Heart right ventricle (tissue), 16 donors: ENCODE measurements at regions of chr21 and their contacts with region 1.

Region 1: DNA sequence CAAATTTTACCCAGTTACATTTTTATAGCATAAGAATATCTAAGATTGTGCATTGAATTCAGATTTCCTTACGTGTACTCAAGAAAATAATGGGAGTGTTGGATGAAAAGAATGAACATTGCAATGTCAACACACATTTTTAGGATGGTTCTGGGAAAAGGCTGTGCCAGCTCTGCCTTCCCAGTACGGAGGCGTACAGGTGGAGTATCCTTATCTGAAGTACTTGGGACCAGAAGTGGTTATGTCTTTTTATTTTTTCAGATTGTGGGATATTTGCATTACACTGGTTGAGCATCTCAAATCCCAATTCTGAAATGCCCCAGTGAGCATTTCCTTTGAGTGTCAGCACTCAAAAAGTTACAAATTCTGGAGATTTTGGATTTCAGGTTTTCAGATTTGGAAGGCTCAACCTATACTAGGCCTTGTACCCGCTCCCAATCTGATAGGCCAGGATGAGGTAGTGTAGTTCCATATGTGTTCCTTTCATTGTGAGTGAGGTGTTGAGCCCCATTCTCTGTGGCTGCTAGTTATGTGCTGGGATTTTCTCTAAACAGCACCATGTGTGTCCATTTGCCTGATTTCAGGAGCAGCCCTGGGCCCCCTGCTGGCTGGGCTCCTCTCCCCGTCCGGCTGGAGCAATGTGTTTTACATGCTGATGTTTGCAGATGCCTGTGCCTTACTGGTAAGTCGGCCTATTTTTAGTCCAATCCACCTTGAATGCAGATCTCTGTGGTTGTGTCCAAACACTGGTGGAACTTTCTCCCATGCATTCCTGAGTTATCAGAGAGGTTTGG is 60.8 kb downstream of the SLC37A1 start:
- DNase-seq: no peak
- ATAC-seq: no peak
- H3K4me3 ChIP-seq: no peak overlapping the region
- H3K27ac ChIP-seq: no peak overlapping the region
- H3K4me1 ChIP-seq: peaks cover 0 to 6% (median 0%) of the 10 kb centered on the region in 9 donors
- H3K27me3 ChIP-seq: no peaks in the 10 kb centered on the region
- CTCF ChIP-seq: peak in 6 of 9 donors; percentile 7 to 33 (median 20)

Region 2: DNA sequence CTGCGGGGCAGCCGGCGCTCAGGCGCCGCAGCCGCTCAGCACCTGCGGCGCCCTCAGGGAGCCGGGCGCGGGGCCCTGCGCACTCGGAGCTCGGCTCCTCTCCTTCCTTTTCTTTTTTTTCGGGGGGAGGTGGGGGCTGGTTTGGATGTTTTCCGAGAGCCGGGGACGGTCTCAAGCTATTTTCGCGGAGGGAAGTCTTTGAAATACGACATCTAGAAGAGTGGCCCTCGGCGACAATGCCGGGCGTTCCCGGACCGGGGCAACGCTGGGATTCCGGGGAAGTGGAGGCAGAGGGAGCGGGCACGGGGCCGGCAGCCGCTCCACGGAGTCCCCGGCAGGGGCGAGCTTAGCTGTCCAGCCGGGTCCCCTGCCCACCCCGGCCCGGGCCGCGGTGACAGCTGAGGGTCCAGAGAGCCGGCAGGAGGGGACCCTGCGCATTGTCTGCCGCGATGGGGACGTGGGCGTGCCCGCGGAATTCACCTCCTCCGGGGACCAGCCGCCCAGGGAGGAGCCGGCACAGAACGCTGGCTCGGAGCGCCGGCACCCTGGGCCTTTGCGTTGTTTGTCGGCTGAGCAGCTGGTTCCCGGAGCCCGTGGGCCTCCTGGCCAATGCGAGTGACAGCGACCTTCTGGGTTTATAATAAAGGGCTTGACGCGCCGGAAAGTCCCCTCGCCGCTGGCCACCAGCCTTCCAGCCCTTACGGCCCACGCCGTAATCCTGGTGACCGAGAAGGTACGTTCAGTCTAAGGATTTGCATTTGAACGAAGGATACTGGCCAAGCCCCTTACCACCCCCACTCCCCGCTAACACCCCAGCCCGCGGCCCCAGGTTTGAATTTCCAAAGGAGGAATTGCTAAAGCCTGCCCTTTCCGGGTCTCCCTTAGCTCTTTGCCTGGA is 60.2 kb before region 1 on chr21:
- intact Hi-C with region 1: loop called in 1 of 10 experiments (anchors 10 kb)
- DNase-seq: peak; percentile 41 to 64
- ATAC-seq: peak; percentile 62 to 86 (median 76)
- H3K4me3 ChIP-seq: peak overlapping the region; percentile 68 to 99 (median 90)
- H3K27ac ChIP-seq: peak overlapping the region; percentile 29 to 86 (median 72)
- H3K4me1 ChIP-seq: peaks cover 0 to 24% (median 15%) of the 10 kb centered on the region in 9 donors
- H3K27me3 ChIP-seq: no peaks in the 10 kb centered on the region
- CTCF ChIP-seq: peak in 1 of 9 donors; percentile 4